ENCODE measurements at regions of chr17 and their contacts with region 1.

Region 1: DNA sequence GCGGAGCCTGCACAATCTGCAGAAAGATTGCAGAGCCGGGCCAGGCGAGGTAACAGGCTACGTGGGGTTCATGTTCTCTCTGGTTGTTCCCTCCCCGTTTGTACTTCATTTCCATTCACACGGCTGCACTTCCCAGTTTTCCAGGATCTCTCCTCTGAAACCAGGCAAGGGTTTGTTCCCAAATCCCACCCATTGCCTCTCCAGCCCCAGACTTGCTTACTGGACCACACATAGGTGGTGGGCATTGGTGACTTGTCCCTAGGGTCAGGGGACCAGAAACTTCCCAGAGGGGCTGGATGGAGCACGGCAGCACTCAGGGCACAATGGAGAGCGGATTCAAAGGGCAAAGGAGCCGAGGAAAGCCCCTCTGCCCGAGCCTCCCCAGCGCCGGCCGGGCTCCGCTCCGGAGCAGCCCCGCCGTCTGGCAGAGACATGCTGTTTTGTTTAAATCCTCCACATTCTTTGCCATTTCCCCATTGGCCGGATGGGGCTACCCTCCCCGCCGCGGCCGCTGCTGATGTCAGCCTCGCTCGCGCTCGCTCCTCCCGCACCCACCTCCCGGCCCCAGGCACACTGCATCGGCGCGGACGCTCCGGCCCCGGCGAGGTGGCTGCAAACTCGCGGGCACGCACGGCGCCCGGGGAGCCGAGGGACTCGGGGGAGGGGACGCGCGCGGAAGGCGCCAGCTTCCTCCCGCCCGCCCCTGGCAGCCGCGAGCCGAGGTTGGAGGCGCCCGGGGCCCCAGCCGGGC is at the start of gene PITPNC1:
- DNase-seq: peak; percentile 77
- ATAC-seq: peak; percentile 74
- H3K4me3 Mint-ChIP-seq: peak within 1 kb of the TSS; percentile 87
- H3K27ac Mint-ChIP-seq: peak within 1 kb of the TSS; percentile 71
- H3K4me1 Mint-ChIP-seq: peaks cover 26% of the 10 kb centered on the region
- H3K27me3 Mint-ChIP-seq: no peaks in the 10 kb centered on the region
- CTCF ChIP-seq: no peak
- total RNA-seq, gene PITPNC1: 15.2 and 19.3 TPM in 2 replicates

Region 2: DNA sequence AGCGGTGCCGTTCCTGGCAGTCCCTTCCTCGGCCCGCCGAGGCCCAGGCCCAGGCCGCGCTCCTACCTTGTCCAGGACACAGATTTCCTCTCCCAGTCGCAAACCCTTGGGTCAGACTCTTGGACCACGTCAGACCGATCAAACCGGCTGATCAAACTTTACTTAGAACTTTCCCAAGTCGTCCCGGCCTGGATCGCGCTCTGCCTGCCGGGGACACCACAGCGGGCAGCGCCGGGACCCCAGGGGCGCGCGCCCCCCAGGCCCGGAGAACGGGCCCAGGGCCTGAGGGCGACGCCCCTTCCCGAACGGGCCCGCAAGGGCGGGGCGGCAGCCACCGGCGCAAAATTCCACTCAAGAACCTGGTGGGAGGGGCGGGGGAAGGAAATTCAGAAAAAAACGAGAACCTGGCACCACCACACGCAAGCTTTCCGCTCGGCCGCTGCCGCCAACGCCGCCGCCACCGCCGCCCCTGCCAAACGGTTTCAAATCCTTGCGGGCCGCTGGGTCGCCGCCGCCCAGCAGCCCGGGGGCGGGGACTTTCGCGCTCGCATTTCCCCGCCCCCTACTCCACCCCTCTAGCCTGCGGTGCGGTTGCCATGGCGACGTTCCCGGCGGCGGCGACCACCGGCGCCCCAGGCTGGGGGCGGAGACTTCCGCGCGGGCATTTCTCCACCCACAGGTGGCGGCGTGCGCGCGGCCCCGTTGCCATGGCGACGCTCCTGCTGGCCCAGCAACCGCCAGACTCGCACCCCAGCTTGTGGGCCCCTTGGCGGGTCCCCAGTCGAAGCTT is 1185.1 kb before region 1 on chr17 and contains the start of gene CEP112:
- CTCF ChIA-PET with region 1: no interaction called
- POLR2A ChIA-PET with region 1: no interaction called
- intact Hi-C with region 1: loop called (anchors 10 kb)
- DNase-seq: peak; percentile 82
- ATAC-seq: peak; percentile 76
- H3K4me3 Mint-ChIP-seq: peak within 1 kb of the TSS; percentile 85
- H3K27ac Mint-ChIP-seq: peak within 1 kb of the TSS; percentile 80
- H3K4me1 Mint-ChIP-seq: peaks cover 34% of the 10 kb centered on the region
- H3K27me3 Mint-ChIP-seq: peaks cover 4% of the 10 kb centered on the region
- CTCF ChIP-seq: no peak
- total RNA-seq, gene CEP112: 3.8 and 3.9 TPM in 2 replicates

Region 3: GRCh38 chr17:67151717-67152116 is 225.2 kb before region 1 on chr17:
- CTCF ChIA-PET with region 1: no interaction called
- POLR2A ChIA-PET with region 1: no interaction called
- intact Hi-C with region 1: no loop called
- DNase-seq: no peak
- ATAC-seq: no peak
- H3K4me3 Mint-ChIP-seq: no peak overlapping the region
- H3K27ac Mint-ChIP-seq: no peak overlapping the region
- H3K4me1 Mint-ChIP-seq: no peaks in the 10 kb centered on the region
- H3K27me3 Mint-ChIP-seq: no peaks in the 10 kb centered on the region
- CTCF ChIP-seq: no peak

Region 4: GRCh38 chr17:67399676-67400075 is 22.8 kb after region 1 on chr17:
- CTCF ChIA-PET with region 1: no interaction called
- POLR2A ChIA-PET with region 1: no interaction called
- intact Hi-C with region 1: no loop called
- DNase-seq: no peak
- ATAC-seq: no peak
- H3K4me3 Mint-ChIP-seq: no peak overlapping the region
- H3K27ac Mint-ChIP-seq: no peak overlapping the region
- H3K4me1 Mint-ChIP-seq: peaks cover 20% of the 10 kb centered on the region
- H3K27me3 Mint-ChIP-seq: no peaks in the 10 kb centered on the region
- CTCF ChIP-seq: no peak

Region 5: GRCh38 chr17:67475236-67475937 is 98.5 kb after region 1 on chr17:
- CTCF ChIA-PET with region 1: interaction called, 85 read pairs
- POLR2A ChIA-PET with region 1: interaction called, 3 read pairs
- intact Hi-C with region 1: loop called (anchors 1 kb)
- DNase-seq: peak; percentile 50
- ATAC-seq: peak; percentile 99
- H3K4me3 Mint-ChIP-seq: peak overlapping the region; percentile 48
- H3K27ac Mint-ChIP-seq: peak overlapping the region; percentile 36
- H3K4me1 Mint-ChIP-seq: peaks cover 10% of the 10 kb centered on the region
- H3K27me3 Mint-ChIP-seq: no peaks in the 10 kb centered on the region
- CTCF ChIP-seq: no peak

Region 6: GRCh38 chr17:67602956-67603355 is 226.0 kb after region 1 on chr17:
- CTCF ChIA-PET with region 1: interaction called, 11 read pairs
- POLR2A ChIA-PET with region 1: interaction called, 5 read pairs
- intact Hi-C with region 1: loop called (anchors 1 kb)
- DNase-seq: no peak
- ATAC-seq: peak; percentile 75
- H3K4me3 Mint-ChIP-seq: no peak overlapping the region
- H3K27ac Mint-ChIP-seq: no peak overlapping the region
- H3K4me1 Mint-ChIP-seq: no peaks in the 10 kb centered on the region
- H3K27me3 Mint-ChIP-seq: no peaks in the 10 kb centered on the region
- CTCF ChIP-seq: no peak

Region 7: GRCh38 chr17:67717624-67718329 is 340.9 kb after region 1 on chr17 and contains the start of gene NOL11:
- CTCF ChIA-PET with region 1: no interaction called
- POLR2A ChIA-PET with region 1: interaction called, 6 read pairs
- intact Hi-C with region 1: loop called (anchors 1 kb)
- DNase-seq: peak; percentile 98
- ATAC-seq: peak; percentile 94
- H3K4me3 Mint-ChIP-seq: peak within 1 kb of the TSS; percentile 100
- H3K27ac Mint-ChIP-seq: peak within 1 kb of the TSS; percentile 99
- H3K4me1 Mint-ChIP-seq: peaks cover 30% of the 10 kb centered on the region
- H3K27me3 Mint-ChIP-seq: no peaks in the 10 kb centered on the region
- CTCF ChIP-seq: no peak
- total RNA-seq, gene NOL11: 67.9 and 70.6 TPM in 2 replicates

Measured in activated B cell treated with CpG ODN at 0.5 μM for 24 hours (primary cell).